Calu3 (cell line): ENCODE measurements at regions of chr2 and their contacts with region 1.

Region 1: GRCh38 chr2:88739985-88740600 is 48.6 kb downstream of the RPIA start:
- DNase-seq: peak; percentile 80
- H3K4me3 Mint-ChIP-seq: no peak overlapping the region
- H3K27ac Mint-ChIP-seq: no peak overlapping the region
- H3K4me1 Mint-ChIP-seq: peaks cover 21% of the 10 kb centered on the region
- H3K27me3 Mint-ChIP-seq: no peaks in the 10 kb centered on the region
- CTCF ChIP-seq: peak; percentile 70

Region 2: GRCh38 chr2:88709181-88709641 is 30.9 kb before region 1 on chr2:
- CTCF ChIA-PET with region 1: no interaction called
- intact Hi-C with region 1: no loop called
- DNase-seq: no peak
- H3K4me3 Mint-ChIP-seq: no peak overlapping the region
- H3K27ac Mint-ChIP-seq: no peak overlapping the region
- H3K4me1 Mint-ChIP-seq: peaks cover 44% of the 10 kb centered on the region
- H3K27me3 Mint-ChIP-seq: no peaks in the 10 kb centered on the region
- CTCF ChIP-seq: no peak

Region 3: DNA sequence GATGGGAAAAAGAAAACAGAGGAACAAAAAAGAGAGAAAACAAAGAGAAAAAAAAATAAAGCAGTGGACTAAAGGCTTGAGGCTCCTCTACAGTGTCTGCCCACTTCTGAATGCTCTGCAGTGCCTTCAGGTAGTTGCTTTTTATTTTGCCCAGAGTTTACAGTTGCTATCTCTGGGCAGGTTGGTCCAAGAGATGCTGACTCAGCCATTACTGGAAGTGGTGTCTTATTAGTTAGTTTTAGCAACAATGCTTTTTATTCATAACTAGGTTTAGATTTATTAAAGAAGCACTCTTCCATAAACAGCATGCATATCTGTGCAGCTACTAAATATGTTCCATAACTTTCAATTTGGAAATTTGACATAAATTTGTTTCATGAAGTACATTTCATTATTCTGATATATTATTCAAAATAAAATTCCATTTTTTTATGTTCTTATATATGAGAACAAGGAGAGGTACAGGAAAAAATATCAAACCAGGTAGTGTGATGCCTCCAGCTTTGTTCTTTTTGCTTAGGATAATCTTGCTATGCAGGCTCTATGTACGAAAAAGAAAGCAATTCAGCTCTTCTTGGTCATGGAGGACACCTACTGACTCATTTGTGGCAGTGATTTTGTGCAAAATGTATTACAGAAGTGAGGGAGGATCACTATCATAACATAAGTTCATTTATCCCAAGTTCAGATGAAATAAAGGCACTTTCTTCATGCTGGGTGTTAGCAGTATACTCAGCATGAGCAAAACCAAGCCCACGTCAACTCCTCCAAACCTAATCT is 20.9 kb after region 1 on chr2:
- CTCF ChIA-PET with region 1: interaction called, 10 read pairs
- intact Hi-C with region 1: no loop called
- DNase-seq: no peak
- H3K4me3 Mint-ChIP-seq: no peak overlapping the region
- H3K27ac Mint-ChIP-seq: no peak overlapping the region
- H3K4me1 Mint-ChIP-seq: no peaks in the 10 kb centered on the region
- H3K27me3 Mint-ChIP-seq: no peaks in the 10 kb centered on the region
- CTCF ChIP-seq: no peak

Region 4: GRCh38 chr2:88838165-88838635 is 98.1 kb after region 1 on chr2:
- CTCF ChIA-PET with region 1: no interaction called
- intact Hi-C with region 1: loop called (anchors 5 kb)
- DNase-seq: no peak
- H3K4me3 Mint-ChIP-seq: no peak overlapping the region
- H3K27ac Mint-ChIP-seq: no peak overlapping the region
- H3K4me1 Mint-ChIP-seq: no peaks in the 10 kb centered on the region
- H3K27me3 Mint-ChIP-seq: peaks cover 46% of the 10 kb centered on the region
- CTCF ChIP-seq: no peak